ENCODE measurements at regions of chr7 and their contacts with region 1.

Region 1: GRCh38 chr7:70788276-70788675 is 343.7 kb upstream of the GALNT17 start:
- DNase-seq: peak; percentile 72
- H3K4me3 Mint-ChIP-seq: no peak overlapping the region
- H3K27ac Mint-ChIP-seq: peak overlapping the region; percentile 80
- H3K4me1 Mint-ChIP-seq: peaks cover 21% of the 10 kb centered on the region
- H3K27me3 Mint-ChIP-seq: no peaks in the 10 kb centered on the region

Region 2: GRCh38 chr7:70678621-70679251 is 109.5 kb before region 1 on chr7:
- CTCF ChIA-PET with region 1: no interaction called
- POLR2A ChIA-PET with region 1: no interaction called
- intact Hi-C with region 1: loop called (anchors 5 kb)
- DNase-seq: peak; percentile 22
- H3K4me3 Mint-ChIP-seq: no peak overlapping the region
- H3K27ac Mint-ChIP-seq: no peak overlapping the region
- H3K4me1 Mint-ChIP-seq: peaks cover 27% of the 10 kb centered on the region
- H3K27me3 Mint-ChIP-seq: peaks cover 8% of the 10 kb centered on the region

Region 3: DNA sequence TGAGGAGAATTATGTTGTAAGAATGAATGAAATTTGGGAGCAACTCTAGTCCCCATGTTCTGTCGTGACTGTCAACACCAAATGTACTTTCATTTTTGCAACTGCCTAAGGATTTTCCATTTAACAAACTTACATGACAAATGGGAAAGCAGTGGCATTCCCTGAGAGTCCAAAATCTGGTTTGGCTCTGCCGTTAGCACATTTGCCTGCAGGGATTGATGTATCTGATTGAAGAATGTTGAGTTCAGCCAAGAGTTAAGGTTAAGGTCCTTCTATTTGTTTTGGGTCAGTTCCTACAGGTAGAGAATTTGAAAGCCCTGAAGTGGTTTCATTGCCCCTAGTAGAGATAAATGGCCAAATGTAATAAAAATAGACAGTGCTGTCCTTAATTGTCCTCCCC is 62.8 kb before region 1 on chr7:
- CTCF ChIA-PET with region 1: no interaction called
- POLR2A ChIA-PET with region 1: interaction called, 3 read pairs
- intact Hi-C with region 1: loop called (anchors 2 kb)
- DNase-seq: no peak
- H3K4me3 Mint-ChIP-seq: no peak overlapping the region
- H3K27ac Mint-ChIP-seq: no peak overlapping the region
- H3K4me1 Mint-ChIP-seq: no peaks in the 10 kb centered on the region
- H3K27me3 Mint-ChIP-seq: no peaks in the 10 kb centered on the region

Region 4: GRCh38 chr7:70775570-70776156 is 12.6 kb before region 1 on chr7:
- CTCF ChIA-PET with region 1: interaction called, 12 read pairs
- POLR2A ChIA-PET with region 1: interaction called, 17 read pairs
- intact Hi-C with region 1: loop called (anchors 1 kb)
- DNase-seq: no peak
- H3K4me3 Mint-ChIP-seq: no peak overlapping the region
- H3K27ac Mint-ChIP-seq: peak overlapping the region; percentile 2
- H3K4me1 Mint-ChIP-seq: peaks cover 48% of the 10 kb centered on the region
- H3K27me3 Mint-ChIP-seq: no peaks in the 10 kb centered on the region

Measured in activated CD4-positive, alpha-beta memory T cell treated with anti-CD3 and anti-CD28 coated beads for 36 hours (primary cell).